Left lung (tissue), 14 donors: ENCODE measurements at regions of chr22 and their contacts with region 1.

Region 1: DNA sequence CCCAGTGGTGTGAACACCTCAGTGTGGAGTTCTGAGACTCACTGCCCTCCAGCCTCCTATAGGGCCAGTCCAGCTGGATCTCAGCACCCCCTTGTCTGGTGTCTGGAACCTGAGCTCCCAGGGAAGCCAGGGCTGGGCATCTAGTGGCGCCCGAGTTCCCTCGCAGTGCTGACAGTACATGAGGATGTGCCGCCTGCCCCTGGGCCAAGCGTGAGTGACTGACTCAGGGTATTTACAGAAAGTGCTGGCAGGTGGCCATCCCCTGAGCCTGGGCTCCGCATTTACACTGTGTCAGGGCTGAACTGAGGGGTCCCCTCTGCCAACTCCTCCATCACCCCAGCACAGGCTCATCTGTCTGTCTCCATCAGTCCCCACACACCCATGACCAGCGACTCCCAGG is 185.3 kb downstream of the BRD1 start:
- DNase-seq: peak in 1 of 4 donors; percentile 67
- ATAC-seq: peak; percentile 21
- H3K4me3 ChIP-seq: no peak overlapping the region
- H3K27ac ChIP-seq: no peak overlapping the region
- H3K4me1 ChIP-seq: peaks cover 0 to 11% of the 10 kb centered on the region in 2 donors
- H3K27me3 ChIP-seq: peaks cover 0 to 5% of the 10 kb centered on the region in 2 donors
- CTCF ChIP-seq: no peak

Region 2: DNA sequence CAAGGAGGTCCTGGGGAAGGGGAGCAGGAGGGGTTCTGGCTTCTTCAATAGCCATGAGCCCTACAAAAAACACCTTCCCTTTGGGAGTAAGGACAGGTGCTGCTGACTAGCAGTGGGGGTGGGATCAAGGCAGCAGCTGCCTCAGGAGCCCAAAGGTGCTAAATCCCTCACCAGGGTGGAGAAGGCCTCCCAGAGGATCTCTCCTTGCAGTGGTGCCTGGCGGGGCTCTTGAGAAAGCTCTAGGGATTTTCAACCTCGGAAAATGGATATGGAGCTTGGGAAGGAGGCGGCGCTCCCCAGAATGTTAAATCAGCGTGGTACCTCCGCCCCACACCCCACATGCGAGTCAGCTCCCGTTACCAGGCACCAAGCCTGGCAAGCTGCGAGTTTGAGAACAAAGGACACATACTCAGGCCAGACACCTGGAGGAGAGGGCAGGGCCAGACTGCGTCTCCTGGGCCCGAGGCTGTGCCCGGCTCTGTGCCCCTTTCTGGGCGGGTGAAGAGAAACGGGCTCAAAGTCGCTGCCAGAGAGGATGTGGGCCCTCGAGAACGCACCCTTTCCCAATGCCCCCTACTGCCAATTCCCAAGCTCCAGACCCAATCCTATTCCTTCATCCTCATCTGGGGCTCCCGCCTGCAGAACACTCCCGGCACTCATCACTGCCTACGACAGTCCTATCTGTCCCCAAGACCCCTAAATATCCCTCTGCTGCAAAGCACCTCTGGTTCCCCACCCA is 46.4 kb after region 1 on chr22:
- intact Hi-C with region 1: loop called in 1 of 2 experiments (anchors 5 kb)
- DNase-seq: no peak
- ATAC-seq: no peak
- H3K4me3 ChIP-seq: no peak overlapping the region
- H3K27ac ChIP-seq: no peak overlapping the region
- H3K4me1 ChIP-seq: no peaks in the 10 kb centered on the region
- H3K27me3 ChIP-seq: peaks cover 0 to 54% of the 10 kb centered on the region in 2 donors
- CTCF ChIP-seq: no peak